Right cardiac atrium (tissue), 5 donors: ENCODE measurements at regions of chr18 and their contacts with region 1.

Region 1: DNA sequence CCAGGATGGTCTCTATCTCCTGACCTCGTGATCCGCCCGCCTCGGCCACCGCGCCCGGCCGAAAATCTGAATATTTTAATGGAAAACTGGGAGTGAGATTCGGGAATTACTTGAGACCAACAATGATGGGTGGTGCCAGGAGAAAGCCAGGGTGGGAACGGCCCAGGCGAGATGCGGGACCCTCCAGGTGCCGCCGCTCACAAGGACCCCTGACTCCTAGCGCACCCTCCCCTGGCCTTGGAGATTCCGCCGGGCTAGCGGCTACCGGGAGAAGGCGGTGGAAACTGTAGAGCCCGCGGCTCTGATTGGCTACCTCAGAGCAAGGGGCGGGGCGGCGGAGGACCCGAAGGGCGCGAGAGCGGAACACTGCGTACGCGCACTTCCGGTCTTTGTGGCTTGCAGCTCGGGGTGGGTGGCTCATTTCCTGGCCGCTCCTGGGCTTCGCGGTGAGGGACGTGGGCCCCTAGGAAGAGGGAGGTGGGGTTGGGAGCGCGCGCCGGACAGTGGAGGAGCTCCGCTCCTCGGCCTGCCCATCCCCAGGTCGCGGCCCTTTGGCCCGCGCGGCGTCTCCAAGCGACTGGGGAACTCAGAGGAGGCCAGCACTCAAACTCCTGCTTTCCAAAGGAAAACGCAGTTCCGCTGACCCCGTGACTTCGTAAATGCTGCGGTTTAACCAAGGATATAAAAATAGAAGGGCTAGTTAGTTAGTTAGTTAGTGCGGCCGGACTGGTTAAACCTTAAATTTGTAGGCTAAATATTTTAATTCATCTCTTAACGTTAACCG is at the start of gene ZNF397:
- DNase-seq: peak; percentile 99 to 100 (median 99)
- ATAC-seq: peak; percentile 100
- H3K4me3 ChIP-seq: peak within 1 kb of the TSS; percentile 87
- H3K27ac ChIP-seq: peak within 1 kb of the TSS; percentile 99
- H3K4me1 ChIP-seq: no peaks in the 10 kb centered on the region
- H3K27me3 ChIP-seq: no peaks in the 10 kb centered on the region
- total RNA-seq, gene ZNF397: 18.6 to 21.8 (median 19.4) TPM

Region 2: DNA sequence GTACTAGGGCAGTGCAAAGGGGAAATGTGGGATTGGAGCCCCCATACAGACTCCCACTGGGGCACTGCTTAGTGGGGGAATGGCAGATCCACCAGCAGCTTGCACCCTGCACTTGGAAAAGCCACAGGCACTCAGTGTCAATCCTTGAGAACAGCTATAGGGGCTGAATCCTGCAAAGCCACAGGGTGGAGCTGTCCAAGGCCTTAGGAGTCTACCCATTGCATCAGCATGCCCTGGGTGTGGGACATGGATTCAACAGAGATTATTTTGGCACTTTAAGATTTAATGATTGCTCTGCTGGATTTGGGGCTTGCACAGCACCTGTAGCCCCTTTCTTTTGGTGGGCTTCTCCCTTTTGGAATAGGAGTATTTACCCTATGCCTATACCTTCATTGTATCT is 111.9 kb after region 1 on chr18:
- intact Hi-C with region 1: loop called in 2 of 4 experiments (anchors 5 to 10 kb)
- DNase-seq: no peak
- ATAC-seq: no peak
- H3K4me3 ChIP-seq: no peak overlapping the region
- H3K27ac ChIP-seq: no peak overlapping the region
- H3K4me1 ChIP-seq: no peaks in the 10 kb centered on the region
- H3K27me3 ChIP-seq: no peaks in the 10 kb centered on the region